ENCODE measurements at regions of chr11 and their contacts with region 1.

Region 1: GRCh38 chr11:61254403-61255025 is 13.5 kb downstream of the PGA5 start:
- DNase-seq: peak; percentile 75
- ATAC-seq: peak; percentile 95
- H3K4me3 Mint-ChIP-seq: no peak overlapping the region
- H3K27ac Mint-ChIP-seq: no peak overlapping the region
- H3K4me1 Mint-ChIP-seq: peaks cover 1% of the 10 kb centered on the region
- H3K27me3 Mint-ChIP-seq: no peaks in the 10 kb centered on the region

Region 2: DNA sequence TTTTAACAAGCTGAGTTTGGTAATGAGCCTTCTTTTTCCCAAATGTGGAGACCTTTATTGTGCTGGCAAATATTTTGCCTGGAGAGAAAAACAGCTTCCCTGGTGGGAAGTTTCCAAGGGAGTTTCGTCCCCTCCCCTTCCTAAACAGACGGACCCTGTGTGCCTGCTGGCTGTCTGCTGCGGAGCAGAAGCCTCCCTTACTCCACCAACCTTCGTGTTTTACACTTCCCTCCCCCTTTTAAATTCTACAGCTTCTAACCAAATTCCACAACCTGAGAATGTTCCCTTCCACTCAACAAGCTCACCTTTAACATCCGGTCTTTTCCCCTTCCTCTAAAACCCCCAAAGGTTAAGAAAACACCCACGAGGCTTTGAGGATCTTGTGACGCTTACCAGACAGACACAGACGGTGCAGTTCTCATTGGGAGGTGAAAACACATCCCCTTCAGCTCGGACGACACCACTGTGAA is 23.5 kb after region 1 on chr11:
- CTCF ChIA-PET with region 1: interaction called, 10 read pairs
- DNase-seq: no peak
- ATAC-seq: no peak
- H3K4me3 Mint-ChIP-seq: no peak overlapping the region
- H3K27ac Mint-ChIP-seq: no peak overlapping the region
- H3K4me1 Mint-ChIP-seq: peaks cover 4% of the 10 kb centered on the region
- H3K27me3 Mint-ChIP-seq: no peaks in the 10 kb centered on the region

Region 3: DNA sequence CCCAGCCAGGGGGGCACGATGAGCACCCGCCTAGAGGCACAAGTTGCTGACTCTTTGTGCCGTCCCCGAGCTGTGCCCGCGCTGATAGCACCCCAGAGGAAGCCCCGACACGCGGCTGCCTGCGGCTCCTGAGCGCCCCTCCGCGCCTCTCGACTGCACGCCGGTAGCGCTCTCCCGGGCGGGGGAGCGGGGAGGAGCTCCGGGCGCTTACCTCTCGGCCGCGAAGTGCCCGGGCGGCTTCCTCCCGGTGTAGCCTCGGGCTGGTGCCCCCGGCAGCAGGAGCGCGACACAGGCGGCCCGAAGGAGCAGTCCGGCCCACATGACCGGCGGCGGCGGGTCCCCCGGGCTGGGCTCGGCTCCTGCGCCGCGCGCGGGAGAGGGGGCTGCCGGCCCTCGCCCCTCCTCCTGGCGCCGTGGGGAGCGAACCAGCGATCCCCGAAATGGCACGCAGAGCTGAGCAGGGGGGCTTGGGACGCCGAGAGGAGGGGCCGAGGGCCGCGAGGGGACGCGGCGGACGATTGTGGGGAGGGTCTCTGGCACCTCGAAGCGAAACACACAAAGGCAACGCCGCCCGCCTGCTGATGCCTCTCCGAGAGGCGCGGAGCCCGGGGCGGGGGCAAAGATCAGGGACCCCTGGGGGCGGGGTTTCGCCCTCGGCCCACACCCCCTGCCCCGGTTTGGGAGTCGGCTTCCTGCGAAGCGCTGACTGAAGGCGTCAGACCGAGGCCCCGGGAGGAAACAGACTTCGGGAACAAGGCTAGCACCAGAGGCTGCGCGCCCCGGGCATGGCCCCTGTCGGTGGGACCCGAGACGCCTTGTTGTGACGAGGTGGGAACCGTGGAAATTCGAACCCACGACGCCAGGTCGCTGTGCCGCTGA is 40.4 kb after region 1 on chr11 and contains the start of gene VWCE:
- CTCF ChIA-PET with region 1: interaction called, 44 read pairs
- DNase-seq: peak; percentile 85
- ATAC-seq: peak; percentile 89
- H3K4me3 Mint-ChIP-seq: peak within 1 kb of the TSS; percentile 76
- H3K27ac Mint-ChIP-seq: peak within 1 kb of the TSS; percentile 72
- H3K4me1 Mint-ChIP-seq: peaks cover 41% of the 10 kb centered on the region
- H3K27me3 Mint-ChIP-seq: peaks cover 13% of the 10 kb centered on the region
- total RNA-seq, gene VWCE: 3.8 to 3.9 TPM

Region 4: DNA sequence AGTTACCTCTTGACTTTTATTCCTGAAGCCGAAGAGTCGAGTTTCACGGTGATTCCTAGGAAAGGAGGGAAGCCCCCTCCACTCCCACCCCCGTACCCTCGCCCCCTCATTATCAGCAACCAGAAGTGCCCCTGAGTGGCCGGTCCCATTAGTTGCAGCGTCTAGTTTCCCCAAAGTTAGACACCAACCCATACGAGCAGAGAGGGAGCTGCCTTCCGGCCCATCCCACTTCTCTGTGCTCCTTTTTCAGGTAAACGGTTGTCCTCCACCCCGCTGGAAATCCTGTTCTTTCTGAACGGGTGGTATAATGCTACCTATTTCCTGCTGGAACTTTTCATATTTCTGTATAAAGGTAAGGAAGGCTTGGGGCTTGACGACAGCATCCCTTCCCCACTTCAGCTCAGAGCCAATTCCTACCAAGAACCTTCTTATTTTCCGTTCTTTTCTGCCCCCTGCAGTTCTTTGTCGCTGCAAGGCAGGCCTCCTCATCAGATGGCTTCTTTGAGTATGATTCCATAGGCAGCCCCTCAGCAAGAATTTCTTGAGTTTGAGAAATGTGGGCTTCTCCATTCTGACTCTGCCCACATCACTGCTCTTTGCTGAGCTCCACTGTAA is 138.6 kb after region 1 on chr11:
- CTCF ChIA-PET with region 1: interaction called, 46 read pairs
- DNase-seq: no peak
- ATAC-seq: no peak
- H3K4me3 Mint-ChIP-seq: peak overlapping the region; percentile 90
- H3K27ac Mint-ChIP-seq: peak overlapping the region; percentile 96
- H3K4me1 Mint-ChIP-seq: peaks cover 22% of the 10 kb centered on the region
- H3K27me3 Mint-ChIP-seq: no peaks in the 10 kb centered on the region